ENCODE measurements at regions of chr1 and their contacts with region 1.

Region 1: DNA sequence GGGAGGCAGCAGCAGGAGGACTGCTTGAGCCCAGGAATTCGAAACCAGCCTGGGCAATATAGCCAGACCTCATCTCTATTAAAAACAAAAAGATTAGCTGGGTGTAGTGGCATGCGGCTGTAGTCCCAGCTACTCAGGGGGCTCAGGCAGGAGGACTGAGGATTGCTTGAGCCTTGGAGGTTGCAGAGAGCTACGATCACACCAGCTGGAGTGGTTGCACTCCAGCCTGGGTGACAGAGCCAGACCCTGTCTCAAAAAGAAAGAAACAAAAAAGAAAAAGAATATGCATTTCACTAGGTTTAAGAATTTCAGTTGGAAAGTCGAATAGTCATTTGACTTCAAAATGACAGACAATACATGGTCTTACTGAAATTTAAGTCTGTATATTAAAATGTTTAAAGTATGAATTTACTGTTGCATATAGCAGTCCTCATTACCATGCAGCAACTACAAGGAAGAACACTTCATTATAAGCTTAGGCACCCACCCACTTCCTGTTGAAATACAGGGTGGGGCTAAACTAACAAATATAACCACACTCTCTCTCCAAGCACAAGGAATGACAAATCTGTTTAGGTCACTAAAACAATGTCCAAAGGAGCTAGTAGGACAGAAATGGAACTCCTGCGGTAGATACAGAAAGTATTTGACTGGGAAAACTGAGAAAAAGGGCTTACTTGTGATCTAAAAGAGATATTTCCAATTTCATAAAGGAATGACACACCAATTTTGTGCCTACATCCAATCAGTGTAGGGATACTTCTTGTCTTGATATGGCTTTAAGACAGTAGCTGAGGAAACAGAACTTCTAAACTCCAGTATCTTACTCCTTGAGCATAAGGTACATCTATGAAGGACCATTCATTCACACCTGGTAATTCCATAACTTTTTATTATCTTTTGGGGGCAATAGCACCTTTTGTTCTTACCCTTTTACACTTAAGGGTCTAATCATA is 44.1 kb downstream of the GPR3 start:
- DNase-seq: peak; percentile 33
- H3K4me3 Mint-ChIP-seq: peak overlapping the region; percentile 30
- H3K27ac Mint-ChIP-seq: peak overlapping the region; percentile 71
- H3K4me1 Mint-ChIP-seq: peaks cover 24% of the 10 kb centered on the region
- H3K27me3 Mint-ChIP-seq: no peaks in the 10 kb centered on the region
- CTCF ChIP-seq: no peak

Region 2: GRCh38 chr1:27416387-27417111 is 19.9 kb before region 1 on chr1:
- CTCF ChIA-PET with region 1: interaction called, 15 read pairs
- intact Hi-C with region 1: no loop called
- DNase-seq: peak; percentile 56
- H3K4me3 Mint-ChIP-seq: no peak overlapping the region
- H3K27ac Mint-ChIP-seq: no peak overlapping the region
- H3K4me1 Mint-ChIP-seq: peaks cover 18% of the 10 kb centered on the region
- H3K27me3 Mint-ChIP-seq: no peaks in the 10 kb centered on the region
- CTCF ChIP-seq: peak; percentile 48

Region 3: GRCh38 chr1:27504588-27505419 is 68.3 kb after region 1 on chr1:
- CTCF ChIA-PET with region 1: no interaction called
- intact Hi-C with region 1: no loop called
- DNase-seq: no peak
- H3K4me3 Mint-ChIP-seq: no peak overlapping the region
- H3K27ac Mint-ChIP-seq: no peak overlapping the region
- H3K4me1 Mint-ChIP-seq: no peaks in the 10 kb centered on the region
- H3K27me3 Mint-ChIP-seq: no peaks in the 10 kb centered on the region
- CTCF ChIP-seq: no peak